ENCODE measurements at regions of chr5 and their contacts with region 1.

Region 1: GRCh38 chr5:142922223-142922952 is 152.2 kb downstream of the ARHGAP26 start:
- DNase-seq: no peak
- ATAC-seq: peak; percentile 51 to 59

Region 2: GRCh38 chr5:142959683-142960657 is 37.6 kb after region 1 on chr5:
- intact Hi-C with region 1: loop called in 1 of 2 experiments (anchors 5 kb)
- DNase-seq: no peak
- ATAC-seq: peak in 1 of 2 donors; percentile 65

Region 3: GRCh38 chr5:143041972-143042770 is 119.8 kb after region 1 on chr5:
- intact Hi-C with region 1: no loop called
- DNase-seq: no peak
- ATAC-seq: peak; percentile 84 to 91